SK-N-SH (cell line): ENCODE measurements at regions of chr1 and their contacts with region 1.

Region 1: DNA sequence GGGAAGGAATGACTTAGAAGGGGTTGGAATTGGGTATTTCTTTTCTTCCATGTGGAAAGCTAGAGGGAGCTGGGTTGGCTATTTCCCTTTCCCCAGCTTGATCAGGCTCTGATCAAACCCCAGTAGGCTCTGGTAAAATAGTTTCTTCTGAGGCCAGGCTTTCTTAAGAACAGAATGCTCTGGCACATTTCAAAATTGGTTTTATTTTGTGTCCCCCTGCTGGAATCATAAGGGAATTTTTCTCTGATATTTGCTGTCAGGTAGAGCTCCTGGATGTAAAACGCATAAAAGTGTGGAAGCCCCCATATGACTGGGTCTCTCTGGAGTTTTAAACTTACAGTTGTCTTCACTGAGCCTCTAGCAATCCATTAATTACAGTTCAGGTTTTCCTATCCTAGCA is 17.1 kb upstream of the APOBEC4 start:
- DNase-seq: no peak
- H3K4me3 ChIP-seq: no peak overlapping the region
- H3K27ac ChIP-seq: no peak overlapping the region
- H3K4me1 ChIP-seq: no peaks in the 10 kb centered on the region; a peak in 1 of 4 replicates
- H3K27me3 ChIP-seq: no peaks in the 10 kb centered on the region
- CTCF ChIP-seq: peak; percentile 11; the same call in 1 of the 2 replicates
- EP300 ChIP-seq: no peak
- RAD21 ChIP-seq: no peak

Region 2: DNA sequence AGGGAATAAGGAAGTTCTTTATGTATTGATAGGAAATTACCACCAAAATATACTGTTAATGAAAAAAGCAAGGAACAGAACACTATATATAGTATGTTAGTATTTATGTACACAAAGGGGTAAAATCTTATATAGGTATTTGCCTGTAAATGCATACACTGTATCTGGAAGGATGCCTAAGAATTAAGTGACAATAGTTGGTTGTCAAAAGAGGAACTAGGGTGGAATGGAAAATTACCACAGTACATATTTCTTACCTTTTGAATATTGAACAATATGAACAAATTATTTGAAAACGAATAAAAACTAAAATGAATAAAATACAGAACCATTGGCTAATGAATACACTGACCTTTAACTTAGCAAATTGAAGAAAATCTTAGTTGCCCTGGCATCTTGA is 48.2 kb before region 1 on chr1:
- CTCF ChIA-PET with region 1: no interaction called
- POLR2A ChIA-PET with region 1: no interaction called
- DNase-seq: no peak
- H3K4me3 ChIP-seq: no peak overlapping the region
- H3K27ac ChIP-seq: peak overlapping the region in 1 of 2 experiments; percentile 47; a peak in 1 of 4 replicates
- H3K4me1 ChIP-seq: peaks cover 3 to 12% of the 10 kb centered on the region in 2 experiments; a peak in 2 of 4 replicates
- H3K27me3 ChIP-seq: no peaks in the 10 kb centered on the region
- CTCF ChIP-seq: no peak
- EP300 ChIP-seq: no peak
- RAD21 ChIP-seq: no peak

Region 3: DNA sequence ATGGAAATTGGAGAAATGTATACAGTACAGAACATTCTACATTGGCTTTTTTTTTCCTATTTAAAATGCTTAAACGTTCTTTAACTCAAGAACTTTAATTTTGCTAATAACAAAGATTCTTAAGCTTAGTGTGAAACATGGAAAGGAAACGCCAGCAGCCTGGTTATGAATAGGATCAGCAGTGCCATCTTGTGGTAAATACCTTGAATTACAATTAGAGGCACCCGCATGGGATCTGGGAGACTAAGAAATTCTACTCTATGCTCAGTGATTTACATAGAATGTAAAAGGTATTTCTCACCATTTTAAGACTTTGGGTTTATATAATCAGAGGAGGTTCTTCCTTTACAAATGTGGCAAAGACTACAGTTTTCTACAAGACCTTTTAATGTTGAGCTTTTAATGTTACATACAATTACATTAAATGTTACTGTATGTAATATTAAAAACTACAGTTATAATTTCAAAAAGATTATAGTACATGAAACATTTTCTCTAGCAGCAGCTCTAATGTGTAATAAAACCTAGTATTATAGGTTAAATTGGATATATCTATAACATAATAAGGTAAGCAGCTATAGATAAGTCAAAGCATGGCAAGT is 15.0 kb after region 1 on chr1:
- CTCF ChIA-PET with region 1: interaction called, 13 read pairs
- POLR2A ChIA-PET with region 1: no interaction called
- DNase-seq: peak; percentile 56
- H3K4me3 ChIP-seq: no peak overlapping the region; a peak in 1 of 4 replicates
- H3K27ac ChIP-seq: no peak overlapping the region
- H3K4me1 ChIP-seq: no peaks in the 10 kb centered on the region
- H3K27me3 ChIP-seq: no peaks in the 10 kb centered on the region
- CTCF ChIP-seq: peak; percentile 70
- EP300 ChIP-seq: no peak
- RAD21 ChIP-seq: peak; percentile 77